ENCODE measurements at regions of chr20 and their contacts with region 1.

Region 1: GRCh38 chr20:20593447-20594170 is 118.8 kb downstream of the RALGAPA2 start:
- DNase-seq: no peak
- H3K4me3 Mint-ChIP-seq: no peak overlapping the region
- H3K27ac Mint-ChIP-seq: no peak overlapping the region
- H3K4me1 Mint-ChIP-seq: no peaks in the 10 kb centered on the region
- H3K27me3 Mint-ChIP-seq: no peaks in the 10 kb centered on the region

Region 2: DNA sequence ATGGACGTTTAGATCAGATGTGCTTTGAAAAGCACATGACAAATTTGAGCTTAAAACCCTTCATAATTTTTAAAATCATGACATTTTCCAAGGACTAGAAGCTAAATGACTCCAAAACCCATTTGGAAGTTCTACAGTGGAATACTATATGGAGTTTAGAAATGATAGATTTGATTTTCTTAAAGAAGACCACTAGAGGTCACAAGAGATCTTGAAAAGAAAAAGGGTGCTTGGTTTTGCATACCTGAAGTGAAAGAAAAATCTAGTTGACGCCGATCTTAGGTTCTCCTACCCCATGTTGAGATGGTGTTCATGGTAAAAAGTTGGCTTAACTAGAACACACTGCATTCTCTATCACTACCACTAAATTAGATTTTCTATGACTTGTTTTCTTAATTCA is 509.8 kb before region 1 on chr20:
- intact Hi-C with region 1: loop called (anchors 1 kb)
- DNase-seq: no peak
- H3K4me3 Mint-ChIP-seq: peak overlapping the region; percentile 54
- H3K27ac Mint-ChIP-seq: no peak overlapping the region
- H3K4me1 Mint-ChIP-seq: no peaks in the 10 kb centered on the region
- H3K27me3 Mint-ChIP-seq: peaks cover 14% of the 10 kb centered on the region

Region 3: DNA sequence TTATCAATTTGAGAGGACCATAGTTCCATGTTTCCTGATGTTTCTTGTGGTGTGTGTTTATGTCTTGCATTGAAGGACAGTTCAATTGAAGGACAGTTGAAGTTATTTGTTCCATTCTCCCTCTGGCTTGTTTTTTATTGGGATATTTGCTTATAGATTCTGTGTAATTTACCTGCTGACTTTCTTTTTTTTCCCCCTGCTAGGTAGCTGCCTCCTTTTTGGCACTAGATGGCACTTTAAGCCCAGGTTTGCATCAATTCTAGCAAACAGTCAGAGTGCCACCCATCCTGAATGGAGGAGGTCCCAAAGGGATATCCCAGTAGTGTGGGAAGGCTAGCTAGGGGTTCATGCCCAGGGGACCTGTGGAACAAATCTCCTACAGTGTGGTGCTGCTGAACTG is 463.2 kb before region 1 on chr20:
- intact Hi-C with region 1: loop called (anchors 2 kb)
- DNase-seq: no peak
- H3K4me3 Mint-ChIP-seq: no peak overlapping the region
- H3K27ac Mint-ChIP-seq: no peak overlapping the region
- H3K4me1 Mint-ChIP-seq: no peaks in the 10 kb centered on the region
- H3K27me3 Mint-ChIP-seq: peaks cover 4% of the 10 kb centered on the region

Region 4: GRCh38 chr20:20184149-20184548 is 409.5 kb before region 1 on chr20:
- intact Hi-C with region 1: loop called (anchors 2 kb)
- DNase-seq: no peak
- H3K4me3 Mint-ChIP-seq: no peak overlapping the region
- H3K27ac Mint-ChIP-seq: no peak overlapping the region
- H3K4me1 Mint-ChIP-seq: no peaks in the 10 kb centered on the region
- H3K27me3 Mint-ChIP-seq: no peaks in the 10 kb centered on the region

Region 5: DNA sequence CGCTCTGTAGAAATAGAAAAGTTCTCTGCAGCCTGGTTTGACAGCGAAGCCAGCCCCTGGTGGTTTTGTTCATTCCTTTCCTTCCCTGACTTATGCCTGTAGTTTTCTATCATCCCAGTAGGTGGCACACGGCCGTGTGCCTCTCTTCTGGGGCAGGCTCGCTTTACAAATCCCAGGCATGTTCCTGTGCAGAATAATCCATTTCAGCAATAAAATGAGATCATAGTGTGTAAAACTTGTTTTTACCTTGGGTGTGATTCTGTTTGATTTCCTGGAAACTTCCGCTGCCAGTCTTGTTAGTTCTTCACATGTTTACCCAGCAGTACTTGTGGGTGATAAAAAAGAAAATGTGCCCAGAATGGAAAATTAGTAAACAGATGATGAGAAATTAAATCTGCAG is 233.1 kb before region 1 on chr20:
- intact Hi-C with region 1: loop called (anchors 1 kb)
- DNase-seq: no peak
- H3K4me3 Mint-ChIP-seq: no peak overlapping the region
- H3K27ac Mint-ChIP-seq: no peak overlapping the region
- H3K4me1 Mint-ChIP-seq: peaks cover 24% of the 10 kb centered on the region
- H3K27me3 Mint-ChIP-seq: peaks cover 53% of the 10 kb centered on the region

Region 6: DNA sequence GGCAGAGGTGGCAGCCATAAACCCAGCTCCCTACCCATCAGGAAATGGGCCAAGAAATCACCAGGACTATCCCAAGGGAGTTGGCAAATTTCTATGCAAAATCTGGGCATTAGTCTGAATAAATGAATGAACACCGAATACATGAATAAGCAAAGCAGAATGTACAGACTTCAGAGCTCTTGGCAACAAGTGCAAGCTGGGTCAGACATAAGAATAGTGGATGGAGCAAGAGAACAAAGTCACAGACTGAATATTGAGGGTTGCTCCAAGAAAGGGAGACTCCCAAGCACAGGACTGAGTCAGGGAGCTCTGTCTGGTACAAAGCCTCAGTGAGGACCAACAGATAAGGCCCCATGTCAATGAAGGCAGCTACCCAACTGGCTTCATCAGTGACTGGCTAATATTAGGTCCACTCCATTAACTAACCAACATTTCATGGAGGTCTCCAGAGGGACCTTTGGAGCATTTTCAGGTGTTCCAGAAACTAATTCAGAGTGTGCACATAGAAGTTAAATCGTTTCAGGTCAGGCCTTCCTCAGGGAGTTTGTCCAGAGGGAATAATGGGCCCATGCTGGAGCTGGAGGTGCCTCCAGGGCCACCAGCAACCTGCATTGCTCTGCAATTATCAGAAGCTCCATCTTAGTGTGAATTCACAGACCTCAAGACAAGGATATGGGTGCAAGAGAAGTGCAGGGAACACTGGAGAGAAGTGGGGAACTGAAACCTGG is 310.3 kb after region 1 on chr20:
- intact Hi-C with region 1: no loop called
- DNase-seq: no peak
- H3K4me3 Mint-ChIP-seq: no peak overlapping the region
- H3K27ac Mint-ChIP-seq: no peak overlapping the region
- H3K4me1 Mint-ChIP-seq: no peaks in the 10 kb centered on the region
- H3K27me3 Mint-ChIP-seq: peaks cover 2% of the 10 kb centered on the region